Activated CD4-positive, alpha-beta T cell treated with anti-CD3 and anti-CD28 coated beads, Interleukin-2, amount 10 ng/mL, durations not matched to agents 7 days and 5 days (primary cell): ENCODE measurements at regions of chr12 and their contacts with region 1.

Region 1: GRCh38 chr12:8045952-8046944 is 13.7 kb downstream of the FOXJ2 start:
- DNase-seq: peak; percentile 84
- H3K4me3 Mint-ChIP-seq: no peak overlapping the region
- H3K27ac Mint-ChIP-seq: no peak overlapping the region
- H3K4me1 Mint-ChIP-seq: peaks cover 16% of the 10 kb centered on the region
- H3K27me3 Mint-ChIP-seq: no peaks in the 10 kb centered on the region

Region 2: GRCh38 chr12:7989827-7990551 is 56.3 kb before region 1 on chr12:
- CTCF ChIA-PET with region 1: no interaction called
- POLR2A ChIA-PET with region 1: no interaction called
- DNase-seq: peak; percentile 84
- H3K4me3 Mint-ChIP-seq: peak overlapping the region; percentile 50
- H3K27ac Mint-ChIP-seq: peak overlapping the region; percentile 91
- H3K4me1 Mint-ChIP-seq: peaks cover 55% of the 10 kb centered on the region
- H3K27me3 Mint-ChIP-seq: no peaks in the 10 kb centered on the region

Region 3: DNA sequence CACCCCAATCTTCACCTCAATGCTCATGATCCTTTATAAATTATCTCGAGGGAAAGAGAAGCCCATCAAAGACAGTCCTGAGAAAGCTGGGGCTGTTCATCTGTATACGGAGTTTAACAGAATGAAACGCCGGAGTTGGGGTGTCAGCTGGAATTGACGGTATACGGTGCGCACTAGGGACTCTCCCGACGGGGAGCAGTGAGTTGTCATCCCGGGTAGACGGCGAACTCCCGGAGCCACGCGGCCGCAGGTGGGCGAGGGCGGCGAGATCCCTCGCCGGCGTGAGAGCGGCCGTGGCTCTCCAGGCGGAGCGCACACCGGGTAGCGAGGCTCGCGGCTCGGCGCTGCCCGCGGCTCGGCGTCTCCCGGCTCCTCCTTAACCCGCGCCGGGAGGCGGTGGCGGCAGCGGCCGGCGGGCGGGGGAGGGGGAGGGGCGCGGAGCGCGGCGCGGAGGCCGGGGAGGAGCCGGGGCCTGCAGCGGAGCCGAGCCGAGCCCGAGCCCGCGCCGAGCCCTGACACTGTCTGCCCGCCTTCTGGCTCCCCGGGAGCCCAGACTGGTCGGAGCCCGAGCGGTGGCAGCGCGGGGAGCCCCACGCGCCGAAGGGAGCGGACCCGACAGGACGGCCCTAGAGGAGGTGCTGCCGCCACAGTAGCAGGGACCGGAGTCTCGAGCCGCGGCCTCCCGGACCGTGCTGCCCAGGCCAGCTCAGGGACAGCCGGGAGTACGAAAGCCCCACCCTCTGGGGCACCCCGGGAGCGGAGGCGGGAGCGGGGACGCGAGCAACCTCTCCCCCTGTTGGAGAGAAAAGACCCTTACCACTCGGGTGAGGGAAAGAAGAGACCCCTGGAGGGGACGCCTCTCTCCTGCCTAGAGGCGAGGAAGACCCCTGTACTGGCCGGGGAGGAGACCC is 13.8 kb before region 1 on chr12 and contains the start of gene FOXJ2:
- CTCF ChIA-PET with region 1: interaction called, 29 read pairs
- POLR2A ChIA-PET with region 1: no interaction called
- DNase-seq: peak; percentile 76
- H3K4me3 Mint-ChIP-seq: peak within 1 kb of the TSS; percentile 85
- H3K27ac Mint-ChIP-seq: peak within 1 kb of the TSS; percentile 85
- H3K4me1 Mint-ChIP-seq: peaks cover 57% of the 10 kb centered on the region
- H3K27me3 Mint-ChIP-seq: no peaks in the 10 kb centered on the region
- total RNA-seq, gene FOXJ2: 21.4 to 22.5 TPM

Region 4: GRCh38 chr12:8078398-8078797 is 32.1 kb after region 1 on chr12:
- CTCF ChIA-PET with region 1: interaction called, 38 read pairs
- POLR2A ChIA-PET with region 1: interaction called, 3 read pairs
- DNase-seq: peak; percentile 67
- H3K4me3 Mint-ChIP-seq: no peak overlapping the region
- H3K27ac Mint-ChIP-seq: no peak overlapping the region
- H3K4me1 Mint-ChIP-seq: peaks cover 32% of the 10 kb centered on the region
- H3K27me3 Mint-ChIP-seq: no peaks in the 10 kb centered on the region

Region 5: GRCh38 chr12:8123124-8123912 is 77.1 kb after region 1 on chr12 and contains the start of gene CLEC4A:
- CTCF ChIA-PET with region 1: no interaction called
- POLR2A ChIA-PET with region 1: no interaction called
- DNase-seq: no peak
- H3K4me3 Mint-ChIP-seq: no peak within 1 kb of the TSS
- H3K27ac Mint-ChIP-seq: no peak within 1 kb of the TSS
- H3K4me1 Mint-ChIP-seq: peaks cover 15% of the 10 kb centered on the region
- H3K27me3 Mint-ChIP-seq: no peaks in the 10 kb centered on the region
- total RNA-seq, gene CLEC4A: 0.19 TPM in 1 of 2 experiments, not detected in the other